Posterior cingulate gyrus (tissue), 11 donors: ENCODE measurements at regions of chr3 and their contacts with region 1.

Region 1: DNA sequence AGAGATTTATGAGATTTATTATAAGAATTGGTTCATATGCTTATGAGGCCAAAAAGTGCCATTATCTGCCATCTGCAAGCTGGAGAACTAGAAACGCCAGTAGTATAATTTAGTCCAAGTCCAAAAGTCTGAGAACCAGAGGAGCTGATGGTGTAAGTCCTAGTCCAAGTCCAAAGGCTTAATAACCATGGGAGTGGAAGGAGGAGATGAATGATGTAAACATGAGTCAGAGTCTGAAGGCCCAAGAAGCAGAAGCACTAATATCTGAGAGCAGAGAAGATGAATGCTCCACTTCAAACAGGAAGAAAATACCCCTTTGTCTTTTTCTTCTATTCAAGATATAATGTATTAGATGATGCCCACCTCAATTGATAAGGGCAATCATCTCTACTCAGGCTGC is 185.7 kb downstream of the CGGBP1 start:
- DNase-seq: no peak

Region 2: GRCh38 chr3:86464180-86464579 is 1409.0 kb before region 1 on chr3:
- intact Hi-C with region 1: no loop called
- DNase-seq: no peak

Region 3: DNA sequence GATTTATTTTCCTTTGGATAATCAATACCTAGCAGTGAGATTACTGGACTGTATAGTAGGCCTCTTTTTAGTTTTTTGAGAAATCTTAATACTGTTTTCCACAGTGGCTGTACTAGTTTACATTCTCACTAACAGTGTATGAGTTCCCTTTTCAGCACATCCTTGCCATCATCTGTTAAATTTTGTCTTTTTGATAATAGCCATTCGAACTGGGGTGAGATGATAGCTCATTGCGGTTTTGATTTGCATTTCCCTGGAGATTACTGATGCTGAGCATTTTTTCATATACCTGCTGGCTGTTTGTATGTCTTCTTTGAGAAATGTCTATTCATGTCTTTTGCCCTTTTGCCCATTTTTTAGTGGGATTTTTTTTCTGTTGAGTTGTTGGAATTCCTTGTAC is 25.1 kb before region 1 on chr3:
- intact Hi-C with region 1: loop called (anchors 2 kb)
- DNase-seq: no peak